Activated CD4-positive, alpha-beta T cell treated with anti-CD3 and anti-CD28 coated beads for 36 hours (primary cell): ENCODE measurements at regions of chr1 and their contacts with region 1.

Region 1: GRCh38 chr1:169630006-169630405 is at the start of gene SELP:
- DNase-seq: no peak
- ATAC-seq: no peak
- H3K4me3 Mint-ChIP-seq: no peak within 1 kb of the TSS
- H3K27ac Mint-ChIP-seq: no peak within 1 kb of the TSS
- H3K4me1 Mint-ChIP-seq: peaks cover 61% of the 10 kb centered on the region
- H3K27me3 Mint-ChIP-seq: no peaks in the 10 kb centered on the region
- total RNA-seq, gene SELP: 0.50 to 1.4 TPM

Region 2: DNA sequence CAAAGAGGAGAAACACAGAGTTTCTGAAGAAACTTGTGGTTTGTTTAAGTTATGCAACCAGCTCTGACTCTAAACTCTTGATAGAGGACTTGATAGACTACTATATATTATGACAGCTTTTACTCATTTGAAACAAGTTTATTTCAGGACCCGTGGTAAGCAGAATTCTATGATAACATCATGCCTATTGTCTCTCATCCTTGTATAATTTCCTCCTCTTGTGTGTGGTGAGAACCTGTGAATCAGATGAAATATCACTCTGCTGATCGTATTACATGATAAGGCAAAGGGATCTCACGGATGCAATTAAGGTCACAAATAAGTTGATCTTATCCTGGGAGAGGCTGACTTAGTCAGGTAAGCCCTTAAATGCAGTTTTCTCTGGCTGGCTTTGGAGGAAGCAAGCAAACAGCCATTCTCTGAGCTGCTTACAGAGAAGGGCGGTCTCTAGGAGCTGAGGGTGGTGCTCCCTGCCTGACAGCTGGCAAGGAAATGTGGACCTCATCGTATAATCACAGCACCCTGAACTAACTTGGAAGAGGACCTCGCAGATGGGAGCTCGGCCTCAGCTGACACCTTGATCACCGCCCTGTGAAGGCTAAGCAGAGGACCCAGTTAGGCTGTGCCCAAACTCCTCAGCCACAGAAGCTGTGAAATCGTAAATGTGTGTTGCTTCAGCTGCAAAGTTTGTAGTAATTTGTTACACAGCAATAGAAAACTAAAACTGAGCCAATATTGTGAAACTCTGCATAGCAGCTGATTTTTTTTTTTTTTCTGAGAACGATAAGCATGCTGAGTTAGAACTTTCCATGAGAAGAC is 749.9 kb before region 1 on chr1:
- CTCF ChIA-PET with region 1: no interaction called
- POLR2A ChIA-PET with region 1: no interaction called
- intact Hi-C with region 1: no loop called
- DNase-seq: no peak
- ATAC-seq: no peak
- H3K4me3 Mint-ChIP-seq: no peak overlapping the region
- H3K27ac Mint-ChIP-seq: no peak overlapping the region
- H3K4me1 Mint-ChIP-seq: no peaks in the 10 kb centered on the region
- H3K27me3 Mint-ChIP-seq: peaks cover 3% of the 10 kb centered on the region

Region 3: GRCh38 chr1:169680377-169681019 is 50.5 kb after region 1 on chr1:
- CTCF ChIA-PET with region 1: no interaction called
- POLR2A ChIA-PET with region 1: no interaction called
- intact Hi-C with region 1: loop called in 1 of 2 experiments (anchors 5 kb)
- DNase-seq: peak; percentile 80
- ATAC-seq: peak; percentile 84
- H3K4me3 Mint-ChIP-seq: peak overlapping the region; percentile 57
- H3K27ac Mint-ChIP-seq: peak overlapping the region; percentile 95
- H3K4me1 Mint-ChIP-seq: peaks cover 64% of the 10 kb centered on the region
- H3K27me3 Mint-ChIP-seq: no peaks in the 10 kb centered on the region

Region 4: GRCh38 chr1:169753552-169753951 is 123.5 kb after region 1 on chr1:
- CTCF ChIA-PET with region 1: no interaction called
- POLR2A ChIA-PET with region 1: no interaction called
- intact Hi-C with region 1: no loop called
- DNase-seq: no peak
- ATAC-seq: peak; percentile 19
- H3K4me3 Mint-ChIP-seq: no peak overlapping the region
- H3K27ac Mint-ChIP-seq: no peak overlapping the region
- H3K4me1 Mint-ChIP-seq: no peaks in the 10 kb centered on the region
- H3K27me3 Mint-ChIP-seq: no peaks in the 10 kb centered on the region